GM12878 (cell line): ENCODE measurements at regions of chr20 and their contacts with region 1.

Region 1: GRCh38 chr20:35619196-35620095 is 3.8 kb downstream of the SPAG4 start:
- DNase-seq: peak; percentile 45
- ATAC-seq: peak; percentile 69
- H3K4me3 ChIP-seq: peak overlapping the region; percentile 99
- H3K27ac ChIP-seq: no peak overlapping the region
- H3K4me1 ChIP-seq: peaks cover 25% of the 10 kb centered on the region
- H3K27me3 ChIP-seq: no peaks in the 10 kb centered on the region
- CTCF ChIP-seq: peak; percentile 74 to 87 (median 77)
- EP300 ChIP-seq: no peak
- POLR2A ChIP-seq: peak; percentile 61
- RAD21 ChIP-seq: peak; percentile 50

Region 2: DNA sequence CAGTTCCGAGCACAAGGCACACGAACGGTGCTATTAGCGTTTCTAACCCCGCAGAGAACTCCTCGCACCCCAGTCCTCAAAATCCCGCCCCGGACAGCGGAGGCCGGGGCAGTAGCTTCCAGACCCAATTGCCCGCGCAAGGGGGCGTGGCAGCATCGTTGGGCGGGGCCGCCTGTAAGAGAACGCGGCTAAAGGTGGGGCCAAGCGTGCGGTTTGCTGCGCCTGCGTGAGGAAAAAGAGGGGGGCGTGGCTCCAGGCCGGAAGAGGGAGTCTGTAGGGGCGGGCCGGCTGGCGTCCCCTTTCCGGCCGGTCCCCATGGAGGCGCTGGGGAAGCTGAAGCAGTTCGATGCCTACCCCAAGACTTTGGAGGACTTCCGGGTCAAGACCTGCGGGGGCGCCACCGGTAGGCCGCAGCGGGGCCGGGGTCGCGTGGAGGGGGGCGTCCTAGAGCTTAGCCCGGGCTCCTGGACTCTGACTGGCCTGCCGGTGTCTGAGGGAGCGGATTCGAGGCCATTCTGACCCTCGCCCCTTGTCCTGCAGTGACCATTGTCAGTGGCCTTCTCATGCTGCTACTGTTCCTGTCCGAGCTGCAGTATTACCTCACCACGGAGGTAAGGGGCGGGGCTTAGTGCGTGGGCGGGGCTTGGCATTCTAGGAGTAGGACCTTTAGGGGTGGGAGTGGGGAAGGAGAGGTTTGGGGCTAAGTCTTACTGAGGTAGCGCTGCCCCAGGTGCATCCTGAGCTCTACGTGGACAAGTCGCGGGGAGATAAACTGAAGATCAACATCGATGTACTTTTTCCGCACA is 77.5 kb before region 1 on chr20 and contains the start of gene ERGIC3:
- CTCF ChIA-PET with region 1: interaction called, 5 read pairs
- POLR2A ChIA-PET with region 1: interaction called, 5 read pairs
- RAD21 ChIA-PET with region 1: interaction called, 4 read pairs
- SMC1A ChIA-PET with region 1: interaction called, 4 read pairs
- in situ Hi-C with region 1: no loop called
- intact Hi-C with region 1: loop called (anchors 5 kb)
- DNase-seq: peak; percentile 77
- ATAC-seq: peak; percentile 95
- H3K4me3 ChIP-seq: peak within 1 kb of the TSS; percentile 92
- H3K27ac ChIP-seq: peak within 1 kb of the TSS; percentile 71; the same call in 1 of the 2 replicates
- H3K4me1 ChIP-seq: peaks cover 12% of the 10 kb centered on the region
- H3K27me3 ChIP-seq: no peaks in the 10 kb centered on the region
- CTCF ChIP-seq: no peak
- EP300 ChIP-seq: no peak
- POLR2A ChIP-seq: peak; percentile 78
- RAD21 ChIP-seq: no peak
- polyA plus RNA-seq, gene ERGIC3: 159 to 205 TPM

Region 3: DNA sequence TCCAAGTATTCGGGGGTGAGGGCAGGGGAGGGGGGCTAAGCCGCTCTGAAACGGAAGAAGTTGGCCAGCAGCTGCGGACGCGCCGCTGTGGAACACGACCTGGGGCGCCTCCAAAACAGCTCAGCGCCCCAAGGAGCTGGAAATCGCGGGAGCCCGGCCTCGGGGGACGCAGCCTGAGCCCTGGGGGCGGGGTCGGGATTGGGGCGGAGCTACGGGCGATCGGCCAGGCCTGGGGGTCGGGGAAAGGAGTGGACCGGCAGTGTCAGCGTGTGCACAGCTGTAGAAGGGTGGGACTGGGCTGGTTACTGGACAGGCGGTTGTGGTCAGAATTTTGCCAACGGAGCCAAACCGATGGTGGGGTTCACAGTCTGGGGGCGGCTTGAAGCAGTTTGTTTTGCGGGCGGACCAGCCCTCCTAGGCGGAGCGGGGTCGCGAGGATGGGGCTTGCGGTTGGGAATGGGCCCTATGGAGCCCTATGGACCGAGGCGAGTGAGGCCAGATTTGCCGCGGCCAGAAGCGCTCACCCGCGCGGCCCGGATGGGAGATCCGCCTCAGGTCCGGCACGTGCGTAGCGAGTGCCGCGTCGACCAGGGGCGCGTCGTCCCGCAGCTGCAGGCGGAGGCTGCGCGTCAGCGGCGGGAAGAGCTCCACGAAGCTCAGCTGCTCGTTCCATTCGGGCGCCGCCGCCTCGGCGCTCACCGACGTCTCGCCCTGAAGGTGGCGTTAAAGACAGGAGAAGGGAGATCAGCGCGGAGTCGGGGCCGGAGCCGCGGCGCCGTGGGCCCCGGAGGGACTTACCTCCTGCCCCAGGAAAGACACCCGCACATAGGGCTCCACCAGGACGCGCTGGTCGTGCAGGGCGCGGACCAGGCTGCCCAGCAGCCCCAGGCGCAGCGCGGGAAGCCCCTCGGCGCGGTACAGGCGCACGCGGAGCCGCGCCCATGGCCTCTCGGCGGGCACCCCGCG is 18.2 kb before region 1 on chr20:
- CTCF ChIA-PET with region 1: interaction called, 17 read pairs
- POLR2A ChIA-PET with region 1: interaction called, 4 read pairs
- RAD21 ChIA-PET with region 1: interaction called, 11 read pairs
- SMC1A ChIA-PET with region 1: interaction called, 5 read pairs
- in situ Hi-C with region 1: no loop called
- intact Hi-C with region 1: no loop called
- DNase-seq: no peak
- ATAC-seq: peak; percentile 86
- H3K4me3 ChIP-seq: peak overlapping the region; percentile 57; the same call in 1 of the 2 replicates
- H3K27ac ChIP-seq: no peak overlapping the region
- H3K4me1 ChIP-seq: peaks cover 10% of the 10 kb centered on the region
- H3K27me3 ChIP-seq: peaks cover 9 to 11% of the 10 kb centered on the region in 2 experiments; a peak in 3 of 4 replicates
- CTCF ChIP-seq: peak; percentile 30 to 76 (median 49); a peak in 5 of 6 replicates
- EP300 ChIP-seq: no peak
- POLR2A ChIP-seq: no peak
- RAD21 ChIP-seq: peak; percentile 60

Region 4: DNA sequence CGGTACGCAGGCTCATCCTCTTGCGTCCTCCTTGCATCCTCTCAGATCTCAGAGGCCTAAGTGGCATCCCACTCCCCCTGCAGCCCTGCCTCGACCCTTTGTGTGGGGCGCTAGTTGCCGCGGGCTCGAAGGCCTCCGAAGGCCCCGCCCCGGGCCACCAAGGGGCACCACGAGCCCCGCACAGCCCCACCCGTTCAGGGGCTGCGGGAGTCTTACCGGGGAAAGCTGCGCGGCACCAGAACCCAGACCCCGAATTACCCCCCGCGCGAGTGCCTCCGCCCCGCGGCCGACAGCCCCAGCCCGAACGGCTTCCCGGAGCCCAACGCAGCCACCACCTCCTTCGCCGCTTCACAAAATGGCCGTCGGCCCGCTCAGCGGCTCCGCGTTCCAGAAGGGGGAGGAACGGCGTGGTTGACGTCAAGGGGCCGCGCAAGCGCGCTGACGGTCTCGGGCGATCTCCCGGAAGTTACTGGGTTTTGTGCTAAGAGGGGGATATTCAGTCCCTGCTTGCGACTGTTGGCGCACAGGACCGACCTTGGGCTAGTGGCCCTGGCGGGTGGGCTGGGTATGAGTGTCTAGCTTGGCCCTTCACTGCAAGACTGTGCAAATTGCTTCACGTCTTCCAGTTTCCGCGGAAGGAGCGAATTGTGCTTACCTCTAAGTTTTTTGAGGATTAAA is 45.2 kb after region 1 on chr20 and contains the starts of genes CPNE1 and RBM12:
- CTCF ChIA-PET with region 1: interaction called, 31 read pairs
- POLR2A ChIA-PET with region 1: interaction called, 24 read pairs
- RAD21 ChIA-PET with region 1: interaction called, 29 read pairs
- SMC1A ChIA-PET with region 1: interaction called, 28 read pairs
- in situ Hi-C with region 1: no loop called
- intact Hi-C with region 1: loop called (anchors 2 kb)
- DNase-seq: peak; percentile 79
- ATAC-seq: peak; percentile 87
- H3K4me3 ChIP-seq: peak within 1 kb of the TSS; percentile 87
- H3K27ac ChIP-seq: peak within 1 kb of the TSS; percentile 87
- H3K4me1 ChIP-seq: peaks cover 10% of the 10 kb centered on the region
- H3K27me3 ChIP-seq: no peaks in the 10 kb centered on the region
- CTCF ChIP-seq: no peak
- EP300 ChIP-seq: no peak
- POLR2A ChIP-seq: peak; percentile 99
- RAD21 ChIP-seq: no peak
- polyA plus RNA-seq, gene CPNE1: 85.7 to 127 TPM
- polyA plus RNA-seq, gene RBM12: 4.7 to 11.4 TPM

Region 5: DNA sequence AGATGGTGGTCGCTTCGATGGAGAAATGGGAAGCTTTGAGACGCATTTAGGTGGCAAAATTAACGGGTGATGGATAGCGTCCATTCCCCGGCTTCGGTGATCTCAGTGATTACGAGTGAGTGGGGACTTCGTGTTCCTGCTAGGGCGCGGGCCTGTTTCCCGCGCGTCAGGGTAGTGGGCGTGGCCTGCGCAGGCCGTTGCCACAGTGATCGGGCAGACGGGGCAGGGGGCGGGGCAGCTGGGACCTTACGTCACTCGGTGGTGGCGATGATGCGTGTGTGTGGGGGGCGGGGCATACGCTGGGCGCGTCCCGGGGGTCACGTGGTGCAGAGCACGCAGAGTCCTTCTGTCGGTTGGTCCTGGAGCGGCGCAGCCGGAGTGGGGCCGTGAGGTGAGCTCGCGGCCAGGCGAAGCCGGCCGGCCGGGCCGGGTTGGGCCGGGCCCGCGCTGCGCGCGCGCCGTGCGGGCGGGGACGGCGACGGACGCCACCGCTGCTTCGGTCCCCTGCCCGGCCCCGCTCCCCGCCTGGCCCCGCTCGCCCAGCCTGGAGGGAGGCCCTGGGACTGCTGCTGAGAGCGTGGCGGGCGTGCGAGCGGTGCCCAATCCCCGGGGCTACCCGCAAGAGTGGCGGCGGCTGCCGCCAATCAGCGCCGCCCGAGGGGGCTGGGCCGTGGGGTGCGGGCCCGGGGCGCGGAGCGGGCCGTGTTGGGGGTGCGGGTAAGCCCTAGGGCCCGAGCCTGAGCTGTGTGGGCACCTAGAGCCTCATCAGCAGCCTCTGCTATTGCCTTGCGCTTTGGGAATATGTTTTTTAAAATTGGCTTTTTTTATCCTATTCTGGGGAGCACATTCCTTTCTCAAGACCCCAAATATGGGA is 152.5 kb after region 1 on chr20 and contains the start of gene PHF20:
- CTCF ChIA-PET with region 1: no interaction called
- POLR2A ChIA-PET with region 1: interaction called, 4 read pairs
- RAD21 ChIA-PET with region 1: interaction called, 10 read pairs
- SMC1A ChIA-PET with region 1: no interaction called
- in situ Hi-C with region 1: no loop called
- intact Hi-C with region 1: no loop called
- DNase-seq: peak; percentile 87
- ATAC-seq: peak; percentile 88
- H3K4me3 ChIP-seq: peak within 1 kb of the TSS; percentile 92
- H3K27ac ChIP-seq: peak within 1 kb of the TSS; percentile 79
- H3K4me1 ChIP-seq: peaks cover 33% of the 10 kb centered on the region
- H3K27me3 ChIP-seq: no peaks in the 10 kb centered on the region
- CTCF ChIP-seq: no peak
- EP300 ChIP-seq: peak; percentile 16 to 24; a peak in 1 of 4 replicates
- POLR2A ChIP-seq: peak; percentile 90
- RAD21 ChIP-seq: no peak
- polyA plus RNA-seq, gene PHF20: 90.7 to 91.2 TPM

Region 6: DNA sequence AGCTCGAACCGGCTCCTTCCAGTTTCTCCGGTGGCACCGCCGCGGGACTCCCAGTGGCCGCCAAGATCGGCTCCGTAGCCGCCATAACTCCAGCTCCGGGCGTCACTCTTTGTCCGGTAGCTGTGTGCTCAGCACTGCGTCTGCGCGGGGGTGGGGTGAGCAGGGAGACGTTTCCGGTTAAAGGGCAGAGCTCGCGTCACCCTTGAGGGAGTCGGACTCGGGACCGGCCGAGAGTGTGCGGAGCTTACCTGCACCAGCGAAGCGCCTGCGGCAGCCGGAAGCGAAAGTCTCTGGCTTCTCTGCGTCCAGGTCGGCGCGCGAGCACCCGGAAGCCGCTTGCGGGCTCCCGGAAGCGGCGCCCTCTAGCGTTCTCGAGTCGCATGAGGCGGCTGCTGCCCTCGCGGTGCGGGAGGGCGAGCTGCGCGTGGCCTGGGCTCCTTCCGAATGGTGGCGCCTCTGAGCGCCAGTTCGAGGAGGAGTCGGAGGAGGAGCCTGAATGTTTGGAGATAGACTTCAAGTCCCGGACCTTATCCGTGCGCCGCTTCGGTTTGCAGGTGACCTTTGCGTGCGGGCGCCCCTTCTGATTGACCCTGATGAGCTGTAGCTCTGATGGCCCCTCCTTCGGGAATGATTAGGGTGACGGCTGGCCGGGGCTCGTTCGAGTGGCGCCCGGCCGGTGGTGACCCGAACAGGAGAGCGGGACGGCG is 334.9 kb after region 1 on chr20 and contains the start of gene SCAND1:
- CTCF ChIA-PET with region 1: interaction called, 10 read pairs
- POLR2A ChIA-PET with region 1: interaction called, 8 read pairs
- RAD21 ChIA-PET with region 1: interaction called, 8 read pairs
- SMC1A ChIA-PET with region 1: interaction called, 5 read pairs
- in situ Hi-C with region 1: no loop called
- intact Hi-C with region 1: loop called (anchors 1 kb)
- DNase-seq: peak; percentile 93
- ATAC-seq: peak; percentile 92
- H3K4me3 ChIP-seq: peak within 1 kb of the TSS; percentile 91
- H3K27ac ChIP-seq: peak within 1 kb of the TSS; percentile 96
- H3K4me1 ChIP-seq: peaks cover 3% of the 10 kb centered on the region
- H3K27me3 ChIP-seq: no peaks in the 10 kb centered on the region
- CTCF ChIP-seq: peak; percentile 93 to 99 (median 99)
- EP300 ChIP-seq: peak in 1 of 2 experiments; percentile 52; a peak in 1 of 4 replicates
- POLR2A ChIP-seq: peak; percentile 95
- RAD21 ChIP-seq: peak; percentile 20; the same call in 1 of the 2 replicates
- polyA plus RNA-seq, gene SCAND1: 0.08 to 0.16 TPM

Region 7: GRCh38 chr20:36217226-36217625 is 597.8 kb after region 1 on chr20:
- CTCF ChIA-PET with region 1: no interaction called
- POLR2A ChIA-PET with region 1: no interaction called
- RAD21 ChIA-PET with region 1: no interaction called
- SMC1A ChIA-PET with region 1: no interaction called
- in situ Hi-C with region 1: no loop called
- intact Hi-C with region 1: no loop called
- DNase-seq: no peak
- ATAC-seq: no peak; the same call in 2 of the 3 replicates
- H3K4me3 ChIP-seq: no peak overlapping the region
- H3K27ac ChIP-seq: no peak overlapping the region
- H3K4me1 ChIP-seq: no peaks in the 10 kb centered on the region; the same call in 1 of the 2 replicates
- H3K27me3 ChIP-seq: no peaks in the 10 kb centered on the region; a peak in 2 of 4 replicates
- CTCF ChIP-seq: 0 out of 6 replicates have a peak, but pooled peaks of 1 of the 3 experiments have one; percentile 3
- EP300 ChIP-seq: no peak
- POLR2A ChIP-seq: no peak
- RAD21 ChIP-seq: no peak